Activated CD4-positive, alpha-beta T cell treated with anti-CD3 and anti-CD28 coated beads for 36 hours (primary cell): ENCODE measurements at regions of chr3 and their contacts with region 1.

Region 1: DNA sequence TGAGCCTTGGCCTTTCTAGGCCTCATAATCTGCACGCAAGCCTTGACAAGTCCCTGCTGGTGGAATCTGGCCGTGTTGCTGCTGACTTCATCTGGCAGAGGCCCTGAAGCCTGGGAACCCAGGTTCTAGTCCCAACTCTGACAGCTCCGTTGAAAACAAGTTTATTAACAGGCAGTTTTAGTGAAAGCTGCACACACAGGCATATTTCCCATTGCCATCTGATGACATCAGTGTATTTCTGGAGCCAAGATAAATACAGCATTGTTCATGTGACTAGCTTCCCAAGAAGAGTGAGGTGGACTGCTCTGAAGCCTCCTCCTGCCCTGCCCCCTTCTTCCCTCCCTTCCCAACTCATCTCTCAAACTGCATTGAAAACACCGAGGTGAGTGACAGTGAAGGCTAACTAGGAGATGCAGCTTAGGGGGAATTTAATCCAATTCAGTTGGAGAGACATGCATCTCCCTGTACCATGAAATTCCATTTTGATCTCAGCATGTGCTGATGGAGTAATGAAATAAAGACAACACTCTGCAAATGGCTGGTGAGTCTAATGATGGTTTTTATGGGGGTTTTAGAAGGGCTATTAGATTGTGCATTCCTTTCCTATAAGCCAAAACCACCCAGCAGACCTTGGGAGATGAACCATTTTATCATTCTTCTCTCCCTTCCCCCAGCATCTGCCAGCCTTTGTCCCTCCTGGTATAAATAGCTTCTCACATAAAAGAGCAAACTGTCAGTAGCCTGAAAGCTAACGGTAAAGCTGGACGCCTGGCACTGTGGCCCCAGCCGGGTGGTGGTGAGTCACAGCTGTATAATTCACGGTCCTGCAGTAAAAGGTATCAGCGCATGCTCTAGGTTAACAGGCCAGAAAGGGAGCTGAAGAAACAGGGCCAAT is 38.0 kb downstream of the PRICKLE2 start:
- DNase-seq: no peak
- ATAC-seq: no peak
- H3K4me3 Mint-ChIP-seq: no peak overlapping the region
- H3K27ac Mint-ChIP-seq: no peak overlapping the region
- H3K4me1 Mint-ChIP-seq: no peaks in the 10 kb centered on the region
- H3K27me3 Mint-ChIP-seq: no peaks in the 10 kb centered on the region

Region 2: DNA sequence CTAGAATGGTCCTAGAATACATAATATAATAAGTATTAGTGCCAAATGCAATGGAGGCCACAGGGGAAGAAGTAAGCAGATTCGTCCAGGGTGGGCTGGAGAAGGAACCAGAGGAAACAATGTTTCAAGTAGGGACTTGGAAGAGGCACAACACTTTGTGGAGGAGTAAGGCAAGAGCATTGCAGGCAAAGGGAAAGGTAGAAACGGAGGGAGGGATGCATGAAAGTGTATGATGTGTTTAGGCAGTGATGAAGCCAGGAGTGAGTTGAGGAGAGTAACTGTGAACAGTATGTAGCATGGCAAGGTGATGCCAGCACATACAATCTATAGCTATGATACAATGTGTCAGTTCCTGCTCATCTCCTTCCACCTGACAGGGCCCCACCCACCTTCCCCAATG is 1028.3 kb before region 1 on chr3:
- CTCF ChIA-PET with region 1: no interaction called
- POLR2A ChIA-PET with region 1: no interaction called
- intact Hi-C with region 1: no loop called
- DNase-seq: no peak
- ATAC-seq: no peak
- H3K4me3 Mint-ChIP-seq: no peak overlapping the region
- H3K27ac Mint-ChIP-seq: no peak overlapping the region
- H3K4me1 Mint-ChIP-seq: no peaks in the 10 kb centered on the region
- H3K27me3 Mint-ChIP-seq: no peaks in the 10 kb centered on the region

Region 3: DNA sequence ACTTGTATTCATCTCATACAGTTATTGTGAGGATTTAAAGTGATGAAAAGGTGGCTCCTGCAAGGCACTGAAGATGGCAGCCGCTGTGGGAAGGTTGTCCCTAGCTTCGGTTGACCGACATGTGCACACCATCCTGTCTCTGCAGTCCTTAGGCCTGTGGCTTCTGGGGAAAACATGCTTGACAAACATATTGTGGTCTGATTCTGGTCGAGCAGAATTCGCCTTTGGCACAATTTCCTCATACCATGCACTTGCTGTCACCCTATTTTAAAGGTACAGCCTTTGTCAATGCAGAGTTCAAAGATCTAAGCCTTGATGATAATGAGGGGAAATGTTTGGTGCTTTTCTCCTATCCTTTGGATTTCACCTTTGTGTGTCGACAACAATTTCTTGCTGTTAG is 13.0 kb before region 1 on chr3:
- CTCF ChIA-PET with region 1: no interaction called
- POLR2A ChIA-PET with region 1: no interaction called
- intact Hi-C with region 1: no loop called
- DNase-seq: no peak
- ATAC-seq: no peak
- H3K4me3 Mint-ChIP-seq: no peak overlapping the region
- H3K27ac Mint-ChIP-seq: no peak overlapping the region
- H3K4me1 Mint-ChIP-seq: no peaks in the 10 kb centered on the region
- H3K27me3 Mint-ChIP-seq: peaks cover 9% of the 10 kb centered on the region

Region 4: GRCh38 chr3:64244011-64244942 is 57.0 kb after region 1 on chr3:
- CTCF ChIA-PET with region 1: no interaction called
- POLR2A ChIA-PET with region 1: no interaction called
- intact Hi-C with region 1: loop called in 1 of 2 experiments (anchors 10 kb)
- DNase-seq: no peak
- ATAC-seq: no peak
- H3K4me3 Mint-ChIP-seq: no peak overlapping the region
- H3K27ac Mint-ChIP-seq: no peak overlapping the region
- H3K4me1 Mint-ChIP-seq: no peaks in the 10 kb centered on the region
- H3K27me3 Mint-ChIP-seq: peaks cover 5% of the 10 kb centered on the region